Activated CD8-positive, alpha-beta T cell treated with anti-CD3 and anti-CD28 coated beads for 36 hours (primary cell): ENCODE measurements at regions of chr11 and their contacts with region 1.

Region 1: DNA sequence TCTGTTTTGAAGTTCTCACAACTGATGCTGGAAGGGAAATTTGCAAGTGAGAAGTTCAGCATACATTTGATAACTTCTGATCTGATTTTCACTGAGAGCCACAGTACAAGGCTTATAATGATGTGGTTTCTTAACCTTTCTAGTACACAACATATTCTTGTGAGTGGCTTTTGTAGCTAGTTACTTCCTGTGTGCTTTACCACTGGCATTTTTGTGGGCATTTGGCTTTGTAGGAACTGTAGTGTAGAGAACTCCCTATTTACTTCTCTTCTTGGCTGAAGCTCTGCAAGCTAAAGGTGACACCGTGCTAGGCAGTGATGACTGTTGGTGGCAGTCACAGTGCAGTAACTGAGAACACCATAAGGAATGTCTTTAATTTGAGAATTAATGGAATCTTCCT is 14.9 kb downstream of the USP47 start:
- DNase-seq: peak; percentile 60
- ATAC-seq: peak; percentile 92
- H3K4me3 Mint-ChIP-seq: peak overlapping the region; percentile 7
- H3K27ac Mint-ChIP-seq: peak overlapping the region; percentile 69
- H3K4me1 Mint-ChIP-seq: peaks cover 72% of the 10 kb centered on the region
- H3K27me3 Mint-ChIP-seq: no peaks in the 10 kb centered on the region
- CTCF ChIP-seq: no peak

Region 2: GRCh38 chr11:11841723-11842420 is 14.8 kb before region 1 on chr11 and contains the start of gene USP47:
- CTCF ChIA-PET with region 1: interaction called, 8 read pairs
- POLR2A ChIA-PET with region 1: interaction called, 16 read pairs
- intact Hi-C with region 1: no loop called
- DNase-seq: peak; percentile 94
- ATAC-seq: peak; percentile 71
- H3K4me3 Mint-ChIP-seq: no peak within 1 kb of the TSS
- H3K27ac Mint-ChIP-seq: no peak within 1 kb of the TSS
- H3K4me1 Mint-ChIP-seq: peaks cover 23% of the 10 kb centered on the region
- H3K27me3 Mint-ChIP-seq: peaks cover 6% of the 10 kb centered on the region
- CTCF ChIP-seq: peak; percentile 56
- total RNA-seq, gene USP47: 37.8 to 39.7 TPM